ENCODE measurements at regions of chr1 and their contacts with region 1.

Region 1: DNA sequence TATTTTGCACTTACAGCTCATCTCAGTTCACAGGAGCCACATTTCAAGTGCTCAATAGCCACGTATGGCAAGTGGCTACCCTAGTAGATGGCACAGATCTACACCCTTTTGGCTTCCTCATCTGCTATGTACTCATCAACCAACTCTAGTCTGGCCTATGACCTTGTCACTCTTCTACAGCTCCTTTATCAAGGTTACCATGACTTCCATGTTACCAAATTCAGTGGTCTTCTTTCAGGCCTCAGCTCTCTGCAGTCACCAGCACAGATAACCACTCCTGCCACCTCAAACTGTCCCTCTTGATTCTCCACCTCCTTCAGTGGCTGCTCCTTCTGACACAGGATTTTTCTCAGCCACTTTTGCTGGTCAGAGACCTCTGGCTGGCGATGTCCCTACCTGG is 11.7 kb upstream of the USP48 start:
- DNase-seq: no peak
- ATAC-seq: no peak
- H3K4me3 ChIP-seq: no peak overlapping the region
- H3K27ac ChIP-seq: no peak overlapping the region
- H3K4me1 ChIP-seq: peaks cover 21% of the 10 kb centered on the region
- H3K27me3 ChIP-seq: no peaks in the 10 kb centered on the region
- CTCF ChIP-seq: no peak
- EP300 ChIP-seq: no peak
- POLR2A ChIP-seq: no peak
- RAD21 ChIP-seq: no peak

Region 2: DNA sequence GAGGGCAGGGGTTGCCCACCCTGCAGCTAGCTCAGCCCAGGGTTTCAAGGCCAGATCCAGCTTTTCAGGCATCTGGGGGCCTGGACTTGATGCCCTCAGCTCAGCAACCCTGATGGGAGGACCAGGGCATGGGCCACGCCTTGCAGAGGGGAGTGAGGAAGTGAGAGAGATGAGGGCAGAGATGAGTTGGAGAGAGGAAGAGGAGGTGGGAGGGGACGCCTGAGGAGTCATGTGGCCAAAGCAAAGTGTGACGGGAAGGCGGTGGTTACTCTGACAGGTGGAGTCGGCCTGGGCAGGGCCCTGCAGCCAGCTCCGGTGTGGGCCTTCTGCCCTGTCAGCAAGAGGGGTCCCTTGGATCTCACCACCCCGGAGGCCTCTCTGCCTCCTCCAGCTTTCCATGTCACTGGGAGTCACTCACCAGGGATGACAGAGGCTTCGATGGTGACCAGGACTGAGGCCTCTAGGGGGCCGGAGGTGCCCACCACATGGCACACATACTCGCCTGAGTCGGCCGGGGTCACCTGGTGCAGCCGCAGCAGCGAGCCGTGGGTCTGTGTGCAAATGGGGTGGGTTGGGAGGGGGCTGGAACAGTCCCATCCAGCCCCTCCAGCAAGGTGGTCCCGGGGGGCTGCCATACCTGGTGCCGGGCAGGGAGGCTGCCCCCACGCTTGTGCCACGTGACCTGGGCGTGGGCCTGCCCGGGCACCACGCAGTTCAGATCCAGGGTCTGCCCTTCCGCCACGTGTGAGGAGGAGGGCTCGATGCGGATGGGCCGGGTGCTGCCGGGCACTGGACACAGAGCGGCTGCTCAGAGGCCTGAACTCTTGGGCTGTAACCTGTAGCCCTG is 57.8 kb after region 1 on chr1:
- CTCF ChIA-PET with region 1: no interaction called
- POLR2A ChIA-PET with region 1: no interaction called
- RAD21 ChIA-PET with region 1: no interaction called
- SMC1A ChIA-PET with region 1: no interaction called
- in situ Hi-C with region 1: no loop called
- intact Hi-C with region 1: no loop called
- DNase-seq: peak; percentile 54
- ATAC-seq: peak; percentile 95
- H3K4me3 ChIP-seq: no peak overlapping the region
- H3K27ac ChIP-seq: no peak overlapping the region
- H3K4me1 ChIP-seq: peaks cover 11% of the 10 kb centered on the region
- H3K27me3 ChIP-seq: no peaks in the 10 kb centered on the region
- CTCF ChIP-seq: no peak
- EP300 ChIP-seq: no peak
- POLR2A ChIP-seq: peak; percentile 61
- RAD21 ChIP-seq: no peak

Region 3: GRCh38 chr1:21869620-21870121 is 75.0 kb after region 1 on chr1:
- CTCF ChIA-PET with region 1: interaction called, 3 read pairs
- POLR2A ChIA-PET with region 1: no interaction called
- RAD21 ChIA-PET with region 1: no interaction called
- SMC1A ChIA-PET with region 1: no interaction called
- in situ Hi-C with region 1: no loop called
- intact Hi-C with region 1: loop called (anchors 5 kb)
- DNase-seq: no peak
- ATAC-seq: no peak
- H3K4me3 ChIP-seq: no peak overlapping the region
- H3K27ac ChIP-seq: no peak overlapping the region
- H3K4me1 ChIP-seq: peaks cover 28% of the 10 kb centered on the region
- H3K27me3 ChIP-seq: no peaks in the 10 kb centered on the region; a peak in 1 of 4 replicates
- CTCF ChIP-seq: no peak
- EP300 ChIP-seq: no peak
- POLR2A ChIP-seq: no peak
- RAD21 ChIP-seq: no peak

Region 4: DNA sequence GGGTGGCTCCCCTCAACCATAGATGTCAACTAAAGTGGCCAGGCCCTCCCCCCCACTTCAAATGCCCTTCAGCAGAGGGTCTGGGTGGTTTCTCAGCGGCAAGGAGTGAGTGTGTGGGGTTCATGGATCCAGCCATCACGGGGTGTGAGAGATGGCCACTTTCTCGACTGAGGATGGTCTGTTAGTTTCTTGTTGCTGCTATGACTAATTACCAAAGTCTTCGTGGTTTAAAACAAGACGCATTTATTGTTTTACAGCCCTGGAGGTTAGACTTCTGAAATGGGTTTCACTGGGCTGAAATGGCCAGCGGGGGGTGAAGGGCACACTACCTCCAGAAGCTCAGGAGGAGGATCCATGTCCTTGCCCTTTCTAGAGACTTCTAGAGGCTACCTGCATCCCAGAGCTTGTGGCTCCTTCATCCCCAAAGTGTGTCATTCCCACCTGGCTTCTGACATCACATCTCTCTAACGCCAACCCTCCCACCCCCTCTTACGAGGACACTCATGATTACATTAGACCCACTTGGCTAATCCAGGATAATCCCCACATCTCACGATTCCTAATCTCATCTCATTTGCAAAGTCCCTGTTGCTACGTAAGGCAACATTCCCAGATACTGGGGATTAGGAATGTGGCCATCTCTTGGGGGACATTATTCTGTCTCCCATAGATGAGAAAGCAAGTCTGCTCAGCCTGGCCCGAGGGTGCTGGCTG is 969.0 kb after region 1 on chr1:
- CTCF ChIA-PET with region 1: no interaction called
- POLR2A ChIA-PET with region 1: no interaction called
- RAD21 ChIA-PET with region 1: no interaction called
- SMC1A ChIA-PET with region 1: no interaction called
- in situ Hi-C with region 1: no loop called
- intact Hi-C with region 1: no loop called
- DNase-seq: peak; percentile 25
- ATAC-seq: peak; percentile 91
- H3K4me3 ChIP-seq: no peak overlapping the region
- H3K27ac ChIP-seq: no peak overlapping the region
- H3K4me1 ChIP-seq: peaks cover 16% of the 10 kb centered on the region
- H3K27me3 ChIP-seq: no peaks in the 10 kb centered on the region; a peak in 2 of 4 replicates
- CTCF ChIP-seq: no peak
- EP300 ChIP-seq: no peak; a peak in 1 of 4 replicates
- POLR2A ChIP-seq: no peak
- RAD21 ChIP-seq: no peak